Lower lobe of right lung (tissue), 2 donors: ENCODE measurements at regions of chr5 and their contacts with region 1.

Region 1: DNA sequence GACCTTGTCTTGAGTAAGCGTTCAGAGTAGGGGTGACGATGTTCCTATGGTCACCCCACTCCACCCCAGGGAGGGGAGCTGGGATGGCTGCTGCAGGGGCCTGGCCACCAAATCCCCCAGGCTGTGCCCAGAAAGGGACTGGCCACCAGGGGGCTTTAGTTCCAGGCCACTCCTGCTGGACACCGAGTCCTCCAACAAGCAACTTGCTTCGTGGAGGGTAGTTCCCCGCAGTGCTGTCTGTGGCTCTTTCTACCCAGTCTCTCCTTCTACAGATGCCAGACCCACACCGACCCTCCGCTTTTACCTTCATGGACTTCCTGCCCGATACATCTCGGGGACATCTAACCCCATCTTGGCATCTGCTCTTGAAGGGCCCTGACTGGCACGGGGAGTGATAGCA is 35.7 kb upstream of the GABRP start:
- DNase-seq: no peak
- ATAC-seq: no peak
- H3K4me3 ChIP-seq: no peak overlapping the region
- H3K27ac ChIP-seq: no peak overlapping the region
- H3K4me1 ChIP-seq: peaks cover 29% of the 10 kb centered on the region
- H3K27me3 ChIP-seq: peaks cover 15% of the 10 kb centered on the region
- CTCF ChIP-seq: no peak

Region 2: DNA sequence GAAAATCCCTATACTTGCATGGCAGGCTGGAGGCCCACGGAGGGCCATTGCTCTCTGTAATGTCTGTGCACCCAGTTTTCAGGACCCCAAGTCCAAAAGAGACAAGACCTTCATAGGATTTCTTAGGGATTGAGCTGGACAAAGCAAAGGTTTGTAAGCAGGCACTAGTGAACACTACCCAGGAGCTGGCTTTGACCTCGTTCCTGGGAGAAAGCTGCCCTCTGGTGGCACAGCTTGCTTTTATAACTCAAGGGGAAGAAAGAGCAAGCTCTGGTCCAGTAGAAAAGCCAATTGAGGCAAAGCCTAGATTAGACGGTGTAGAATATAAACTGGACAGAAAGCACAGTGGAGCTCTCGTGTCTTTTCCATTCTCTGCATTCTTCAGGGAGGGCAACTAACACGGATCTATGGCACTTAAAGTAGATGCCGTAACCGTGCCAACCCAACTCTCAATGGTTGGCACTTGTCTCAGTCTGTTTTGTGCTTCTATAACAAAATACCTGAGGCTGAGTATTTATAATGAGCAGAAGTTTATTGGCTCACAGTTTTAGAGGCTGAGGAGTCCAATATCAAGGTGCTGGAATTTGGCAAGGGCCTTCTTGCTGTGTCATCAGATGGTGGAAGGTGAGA is 43.6 kb after region 1 on chr5:
- intact Hi-C with region 1: loop called (anchors 5 kb)
- DNase-seq: peak; percentile 57
- ATAC-seq: peak; percentile 75 to 90
- H3K4me3 ChIP-seq: no peak overlapping the region
- H3K27ac ChIP-seq: no peak overlapping the region
- H3K4me1 ChIP-seq: peaks cover 9% of the 10 kb centered on the region
- H3K27me3 ChIP-seq: no peaks in the 10 kb centered on the region
- CTCF ChIP-seq: peak; percentile 74

Region 3: DNA sequence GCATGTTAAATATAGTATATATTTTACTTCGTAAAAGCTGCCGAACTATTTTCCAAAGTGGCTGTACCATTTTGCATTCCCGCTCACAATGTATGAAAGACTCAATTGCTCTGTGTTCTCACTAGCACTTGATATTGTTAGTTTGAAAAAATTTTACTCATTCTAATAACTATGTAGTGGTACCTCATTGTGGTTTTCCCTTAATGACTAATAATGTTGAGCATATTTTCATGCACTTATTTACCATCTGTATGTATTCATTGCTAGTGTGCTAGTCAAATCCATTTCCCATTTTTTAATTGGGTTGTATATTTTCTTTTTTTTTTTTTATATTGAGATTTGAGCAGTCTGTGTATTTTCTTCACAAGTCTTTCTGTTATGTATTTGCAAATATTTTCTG is 172.3 kb after region 1 on chr5:
- intact Hi-C with region 1: no loop called
- DNase-seq: no peak
- ATAC-seq: no peak
- H3K4me3 ChIP-seq: no peak overlapping the region
- H3K27ac ChIP-seq: no peak overlapping the region
- H3K4me1 ChIP-seq: no peaks in the 10 kb centered on the region
- H3K27me3 ChIP-seq: no peaks in the 10 kb centered on the region
- CTCF ChIP-seq: no peak